ENCODE measurements at regions of chr10 and their contacts with region 1.

Region 1: GRCh38 chr10:62373995-62374861 is at the start of gene ZNF365:
- DNase-seq: peak in 1 of 2 donors; percentile 77
- H3K4me3 ChIP-seq: peak within 1 kb of the TSS; percentile 55 to 93
- H3K27ac ChIP-seq: peak within 1 kb of the TSS; percentile 70 to 82
- H3K4me1 ChIP-seq: peaks cover 4% of the 10 kb centered on the region in 2 donors
- H3K27me3 ChIP-seq: no peaks in the 10 kb centered on the region
- CTCF ChIP-seq: peak in 1 of 3 experiments; percentile 8
- total RNA-seq, gene ZNF365: not detected

Region 2: DNA sequence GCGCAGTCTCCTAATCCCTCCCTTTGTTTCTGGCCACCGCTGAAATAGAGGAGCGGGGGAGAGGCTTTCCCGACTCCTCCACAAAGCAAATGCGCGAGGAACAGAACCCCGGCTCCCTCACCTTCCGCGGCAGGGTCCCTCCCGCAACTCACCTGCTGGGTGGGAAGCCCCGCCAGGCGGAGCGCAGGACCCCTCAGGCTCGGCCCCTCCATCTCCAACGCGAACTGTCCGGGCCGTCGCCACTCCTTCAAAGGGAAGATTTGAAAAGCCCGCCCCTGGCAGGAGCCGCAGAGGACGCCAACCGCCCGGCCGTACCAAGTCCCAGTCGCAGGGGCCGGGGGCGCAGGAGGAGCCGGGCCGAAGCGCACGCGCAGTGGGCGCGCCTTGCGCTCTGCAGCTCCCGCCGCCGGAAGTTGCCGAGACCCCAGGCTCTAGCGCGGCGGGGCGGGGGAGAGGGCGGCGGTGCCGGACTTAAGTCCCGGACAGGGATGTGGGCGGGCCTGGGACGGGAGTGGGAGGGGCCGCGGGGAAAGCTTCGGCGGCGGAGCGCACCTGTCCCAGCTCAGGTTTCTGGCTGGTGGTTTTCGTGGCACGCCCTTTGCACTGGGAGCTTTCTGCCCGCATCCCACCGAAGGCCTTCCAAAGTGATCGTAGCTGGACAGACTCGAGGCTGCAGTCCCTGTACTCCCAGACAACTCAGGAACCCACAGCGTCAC is 105.7 kb before region 1 on chr10 and contains the start of gene RTKN2:
- intact Hi-C with region 1: loop called (anchors 5 kb)
- DNase-seq: peak; percentile 12 to 79
- H3K4me3 ChIP-seq: peak within 1 kb of the TSS; percentile 70 to 84
- H3K27ac ChIP-seq: no peak within 1 kb of the TSS
- H3K4me1 ChIP-seq: peaks cover 0 to 6% of the 10 kb centered on the region in 2 donors
- H3K27me3 ChIP-seq: no peaks in the 10 kb centered on the region
- CTCF ChIP-seq: no peak
- total RNA-seq, gene RTKN2: not detected

Region 3: GRCh38 chr10:62437696-62438095 is 63.5 kb after region 1 on chr10:
- intact Hi-C with region 1: loop called (anchors 5 kb)
- DNase-seq: no peak
- H3K4me3 ChIP-seq: no peak overlapping the region
- H3K27ac ChIP-seq: no peak overlapping the region
- H3K4me1 ChIP-seq: peaks cover 0 to 5% of the 10 kb centered on the region in 2 donors
- H3K27me3 ChIP-seq: no peaks in the 10 kb centered on the region
- CTCF ChIP-seq: peak; percentile 63 to 79 (median 69)

Region 4: DNA sequence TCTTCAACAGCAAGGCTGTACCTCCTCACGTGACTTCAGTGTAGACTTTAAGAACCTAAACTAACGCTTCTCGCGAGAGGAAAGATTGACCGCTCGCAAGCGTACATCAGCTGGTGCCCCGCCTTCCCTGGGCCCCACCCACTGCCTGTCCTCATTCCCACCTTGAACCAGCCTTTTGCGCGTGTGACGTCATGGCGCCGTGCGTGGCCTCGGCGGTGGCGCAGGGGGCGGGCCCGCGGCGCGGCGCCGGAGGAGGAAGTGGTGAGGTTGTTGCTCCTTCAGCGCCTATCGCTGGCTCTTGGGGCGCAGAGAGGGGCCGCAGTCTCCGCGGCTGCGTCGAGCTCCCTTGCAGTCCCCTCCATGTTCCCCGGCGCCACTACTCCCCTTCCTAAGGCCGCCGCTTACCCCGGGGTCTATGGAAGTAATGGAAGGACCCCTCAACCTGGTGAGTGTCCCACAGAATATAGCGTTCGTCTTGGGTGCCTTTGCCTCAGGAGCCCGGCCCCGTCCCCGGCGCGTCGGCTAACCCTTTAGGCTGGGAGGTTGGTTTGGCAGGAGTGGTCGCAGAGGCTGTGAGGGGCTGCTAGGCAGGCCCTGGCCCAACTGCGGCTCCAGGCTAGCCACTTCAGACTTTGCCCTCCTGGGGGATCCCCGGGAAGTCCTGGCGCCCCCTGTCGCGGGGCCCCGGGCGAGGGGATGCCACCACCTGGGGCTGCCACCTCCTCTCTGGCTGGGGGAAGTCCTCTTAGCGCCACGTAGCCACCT is 759.0 kb after region 1 on chr10 and contains the start of gene NRBF2:
- intact Hi-C with region 1: loop called (anchors 10 kb)
- DNase-seq: peak; percentile 95 to 99
- H3K4me3 ChIP-seq: peak within 1 kb of the TSS; percentile 97 to 99
- H3K27ac ChIP-seq: peak within 1 kb of the TSS; percentile 95 to 97
- H3K4me1 ChIP-seq: peaks cover 4 to 10% of the 10 kb centered on the region in 2 donors
- H3K27me3 ChIP-seq: no peaks in the 10 kb centered on the region
- CTCF ChIP-seq: peak in 1 of 3 experiments; percentile 21
- total RNA-seq, gene NRBF2: 4.2 TPM